Head of caudate nucleus (tissue), 42 donors: ENCODE measurements at regions of chr5 and their contacts with region 1.

Region 1: GRCh38 chr5:139968547-139969261 is 74.4 kb downstream of the NRG2 start:
- DNase-seq: peak; percentile 84 to 96 (median 91)

Region 2: DNA sequence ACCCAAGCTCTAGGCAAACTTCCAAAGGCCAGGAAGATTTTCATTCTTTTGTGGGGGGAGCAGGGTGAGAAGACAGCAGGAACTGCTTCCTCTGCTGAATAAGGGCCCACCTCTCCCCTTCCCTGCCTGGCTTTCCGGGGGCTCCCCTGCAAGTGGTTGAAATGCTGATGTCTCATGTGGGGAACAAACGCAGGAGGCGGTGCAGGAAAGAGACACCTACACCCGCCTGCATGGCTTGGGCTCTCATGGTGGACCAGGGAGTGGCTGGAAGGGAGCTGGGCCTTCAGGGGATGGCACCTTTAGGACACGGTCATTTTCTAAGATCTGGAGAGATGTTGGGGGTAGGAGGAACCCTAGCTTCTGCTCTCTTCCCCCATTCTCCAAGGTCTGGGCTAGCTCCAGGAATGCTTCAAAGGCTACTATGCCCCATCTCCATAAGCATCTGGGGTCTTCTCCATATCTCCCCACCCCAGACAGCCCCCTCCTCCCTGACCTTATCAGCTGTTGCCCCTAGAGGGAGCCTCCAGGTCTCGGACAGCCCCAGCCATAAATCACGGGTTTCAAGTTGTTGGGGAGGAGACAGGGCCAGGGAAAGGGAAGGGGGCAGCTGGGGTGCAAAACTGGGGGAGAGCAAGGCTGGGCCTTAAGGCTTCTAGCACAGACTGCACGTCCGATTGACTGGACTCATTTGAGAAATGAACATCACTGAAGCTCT is 96.5 kb before region 1 on chr5:
- intact Hi-C with region 1: loop called (anchors 10 kb)
- DNase-seq: no peak